ENCODE measurements at regions of chr1 and their contacts with region 1.

Region 1: DNA sequence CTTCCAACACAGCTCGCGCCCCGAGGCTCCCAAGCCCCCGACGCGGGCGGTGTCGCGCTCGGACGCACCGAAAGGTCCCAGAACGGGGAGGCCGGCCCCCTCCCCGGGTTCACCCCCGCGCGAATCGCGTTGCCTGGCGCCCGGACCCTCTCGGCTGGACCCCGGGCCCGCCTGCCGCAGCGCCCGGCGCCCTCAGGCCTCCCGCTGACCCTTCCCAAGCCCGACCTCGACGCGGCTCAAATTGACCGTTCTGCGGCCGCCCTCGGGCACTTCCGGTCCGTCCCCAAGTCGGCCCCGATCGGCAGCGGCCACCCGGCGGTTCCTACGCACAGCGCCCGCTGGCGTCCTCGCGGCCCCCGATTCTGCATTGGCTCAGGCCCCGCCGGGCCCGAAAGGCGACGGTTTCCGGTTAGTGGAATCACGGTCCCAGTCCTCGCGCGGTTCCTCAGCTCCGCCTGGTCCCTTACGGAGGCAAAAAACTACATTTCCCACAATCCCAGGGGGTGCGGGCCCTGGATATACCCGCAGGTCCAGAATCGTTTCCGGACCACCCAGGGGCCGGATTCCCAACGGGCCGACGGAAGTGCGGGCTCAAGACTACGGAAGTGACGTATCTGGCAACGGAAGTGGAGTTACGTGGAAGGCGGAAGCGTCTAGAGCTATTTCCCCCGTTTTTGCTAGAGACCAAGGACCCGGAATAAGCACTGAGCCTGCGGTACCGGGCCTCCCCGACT is at the start of gene AURKAIP1:
- DNase-seq: peak; percentile 88
- ATAC-seq: peak; percentile 91
- H3K4me3 Mint-ChIP-seq: peak within 1 kb of the TSS; percentile 90
- H3K27ac Mint-ChIP-seq: peak within 1 kb of the TSS; percentile 92
- H3K4me1 Mint-ChIP-seq: peaks cover 23% of the 10 kb centered on the region
- H3K27me3 Mint-ChIP-seq: no peaks in the 10 kb centered on the region
- CTCF ChIP-seq: no peak
- total RNA-seq, gene AURKAIP1: 91.5 and 105 TPM in 2 replicates

Region 2: GRCh38 chr1:958823-959729 is 416.0 kb before region 1 on chr1 and contains the start of gene NOC2L:
- CTCF ChIA-PET with region 1: no interaction called
- POLR2A ChIA-PET with region 1: no interaction called
- intact Hi-C with region 1: loop called (anchors 1 kb)
- DNase-seq: peak; percentile 95
- ATAC-seq: peak; percentile 90
- H3K4me3 Mint-ChIP-seq: peak within 1 kb of the TSS; percentile 89
- H3K27ac Mint-ChIP-seq: peak within 1 kb of the TSS; percentile 56
- H3K4me1 Mint-ChIP-seq: peaks cover 28% of the 10 kb centered on the region
- H3K27me3 Mint-ChIP-seq: no peaks in the 10 kb centered on the region
- CTCF ChIP-seq: no peak
- total RNA-seq, gene NOC2L: 95.5 and 96.8 TPM in 2 replicates

Region 3: GRCh38 chr1:1033009-1033587 is 342.0 kb before region 1 on chr1:
- CTCF ChIA-PET with region 1: interaction called, 3 read pairs
- POLR2A ChIA-PET with region 1: interaction called, 3 read pairs
- intact Hi-C with region 1: loop called (anchors 5 kb)
- DNase-seq: peak; percentile 97
- ATAC-seq: peak; percentile 96
- H3K4me3 Mint-ChIP-seq: peak overlapping the region; percentile 72
- H3K27ac Mint-ChIP-seq: peak overlapping the region; percentile 24
- H3K4me1 Mint-ChIP-seq: peaks cover 19% of the 10 kb centered on the region
- H3K27me3 Mint-ChIP-seq: no peaks in the 10 kb centered on the region
- CTCF ChIP-seq: peak; percentile 67

Region 4: DNA sequence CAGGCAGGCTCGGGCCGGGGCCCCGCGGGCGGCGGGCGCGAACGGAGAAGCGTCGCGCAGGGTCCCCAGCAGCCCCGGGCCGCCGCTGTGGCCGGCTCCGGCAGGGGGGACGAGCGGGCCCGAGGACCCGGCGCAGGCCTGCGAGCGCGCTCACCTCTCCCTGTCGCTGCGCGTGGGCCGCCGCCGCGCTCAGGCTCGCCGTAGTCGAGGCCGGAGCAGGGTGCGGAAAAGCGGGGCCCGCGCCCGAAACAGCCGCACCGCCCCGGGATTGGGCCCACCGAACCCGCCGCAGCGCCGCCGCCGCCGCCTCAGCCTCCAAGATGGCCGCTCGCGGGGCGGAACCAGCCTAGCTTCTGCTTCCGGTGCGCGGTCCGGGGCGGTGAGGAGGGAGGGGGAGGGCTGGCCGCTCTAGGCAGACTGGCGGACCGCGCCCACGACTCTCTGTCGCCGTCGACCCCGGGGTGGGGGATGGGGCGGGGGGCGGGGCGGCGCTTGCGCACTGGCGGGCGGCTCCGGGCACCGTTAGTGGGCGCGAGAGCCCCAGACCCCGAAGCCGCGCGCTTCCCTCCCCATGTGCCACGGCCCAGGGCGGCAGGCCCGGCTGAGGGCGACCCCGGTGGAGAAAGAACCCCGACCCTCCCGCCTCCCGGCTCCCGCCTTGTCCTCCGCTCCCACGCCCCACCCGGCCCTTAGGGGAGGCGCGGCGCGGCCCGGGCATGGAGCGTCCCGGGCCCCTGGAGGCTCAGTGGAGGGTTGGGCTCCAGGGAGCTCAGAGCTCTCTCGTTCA is 101.4 kb before region 1 on chr1 and contains the start of gene UBE2J2:
- CTCF ChIA-PET with region 1: no interaction called
- POLR2A ChIA-PET with region 1: interaction called, 5 read pairs
- intact Hi-C with region 1: loop called (anchors 1 kb)
- DNase-seq: peak; percentile 82
- ATAC-seq: peak; percentile 96
- H3K4me3 Mint-ChIP-seq: peak within 1 kb of the TSS; percentile 87
- H3K27ac Mint-ChIP-seq: peak within 1 kb of the TSS; percentile 70
- H3K4me1 Mint-ChIP-seq: peaks cover 38% of the 10 kb centered on the region
- H3K27me3 Mint-ChIP-seq: no peaks in the 10 kb centered on the region
- CTCF ChIP-seq: no peak
- total RNA-seq, gene UBE2J2: 79.2 and 89.9 TPM in 2 replicates

Region 5: DNA sequence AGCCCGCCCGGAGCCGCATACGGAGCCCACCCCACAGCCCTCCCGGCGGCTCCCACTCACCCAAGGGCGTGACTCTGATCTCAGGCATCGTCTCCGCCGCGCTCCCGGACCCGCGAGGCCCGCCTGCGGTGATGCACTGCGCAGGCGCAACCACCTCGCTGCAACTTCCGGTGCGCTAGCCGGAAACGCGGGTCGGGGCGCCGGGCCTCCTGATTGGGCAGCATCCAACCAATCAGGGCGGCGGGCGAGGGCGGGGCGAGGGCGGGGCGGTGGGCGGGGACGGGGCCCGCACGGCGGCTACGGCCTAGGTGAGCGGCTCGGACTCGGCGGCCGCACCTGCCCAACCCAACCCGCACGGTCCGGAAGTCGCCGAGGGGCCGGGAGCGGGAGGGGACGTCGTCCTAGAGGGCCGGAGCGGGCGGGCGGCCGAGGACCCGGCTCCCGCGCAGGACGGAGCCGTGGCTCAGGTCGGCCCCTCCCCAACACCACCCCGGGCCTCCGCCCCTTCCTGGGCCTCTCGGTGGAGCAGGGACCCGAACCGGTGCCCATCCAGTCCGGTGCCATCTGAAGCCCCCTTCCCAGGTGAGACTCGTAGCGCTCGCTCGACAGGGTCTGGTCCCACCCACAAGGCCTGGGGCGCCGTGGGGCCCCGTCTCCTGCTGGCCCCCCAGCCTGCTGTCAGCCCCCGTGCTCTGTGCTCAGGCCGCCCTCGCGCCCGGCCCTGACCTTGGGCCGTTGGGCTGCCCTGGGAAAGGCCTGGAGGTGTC is 50.4 kb before region 1 on chr1 and contains the starts of genes CPTP and INTS11:
- CTCF ChIA-PET with region 1: no interaction called
- POLR2A ChIA-PET with region 1: interaction called, 5 read pairs
- intact Hi-C with region 1: loop called (anchors 1 kb)
- DNase-seq: peak; percentile 91
- ATAC-seq: peak; percentile 87
- H3K4me3 Mint-ChIP-seq: peak within 1 kb of the TSS; percentile 90
- H3K27ac Mint-ChIP-seq: peak within 1 kb of the TSS; percentile 80
- H3K4me1 Mint-ChIP-seq: peaks cover 41% of the 10 kb centered on the region
- H3K27me3 Mint-ChIP-seq: no peaks in the 10 kb centered on the region
- CTCF ChIP-seq: no peak
- total RNA-seq, gene CPTP: 13.8 and 15.3 TPM in 2 replicates
- total RNA-seq, gene INTS11: 131 and 151 TPM in 2 replicates

Region 6: DNA sequence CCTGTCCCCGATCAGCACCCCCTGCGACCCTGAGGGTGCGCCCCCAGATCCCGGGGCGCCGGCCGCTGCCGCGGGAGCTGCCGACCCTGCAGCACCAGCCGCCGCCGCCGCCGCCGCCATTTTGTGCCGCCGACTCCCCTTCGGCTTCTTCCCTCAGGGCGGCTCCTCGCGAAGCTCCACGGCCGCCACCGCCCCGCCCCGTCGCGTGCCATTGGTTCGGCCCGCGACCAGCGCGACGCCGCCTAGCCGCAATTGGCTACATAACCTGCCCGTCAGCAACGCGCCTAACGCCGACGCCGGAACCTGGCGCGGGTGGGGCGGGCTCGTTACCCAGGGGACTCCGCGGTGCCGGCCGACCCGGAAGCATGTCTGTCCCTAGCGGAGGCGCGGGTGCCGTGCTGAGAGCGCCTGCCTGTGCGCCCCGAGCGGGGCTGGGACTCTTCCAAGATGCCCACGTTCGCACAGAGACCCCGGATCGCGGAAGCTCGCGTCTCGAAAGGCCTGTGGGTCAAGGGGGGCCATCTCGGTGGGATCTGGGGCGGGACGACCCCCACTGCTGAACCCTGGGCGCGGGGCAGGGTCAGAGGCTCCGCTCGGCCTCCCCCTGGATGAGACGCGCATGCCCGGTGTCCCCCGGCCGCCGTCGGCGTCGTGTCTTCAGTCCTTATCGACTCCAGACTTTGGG is 24.2 kb after region 1 on chr1 and contains the start of gene CCNL2:
- CTCF ChIA-PET with region 1: no interaction called
- POLR2A ChIA-PET with region 1: interaction called, 116 read pairs
- intact Hi-C with region 1: loop called (anchors 1 kb)
- DNase-seq: peak; percentile 98
- ATAC-seq: peak; percentile 96
- H3K4me3 Mint-ChIP-seq: peak within 1 kb of the TSS; percentile 92
- H3K27ac Mint-ChIP-seq: peak within 1 kb of the TSS; percentile 86
- H3K4me1 Mint-ChIP-seq: peaks cover 55% of the 10 kb centered on the region
- H3K27me3 Mint-ChIP-seq: no peaks in the 10 kb centered on the region
- CTCF ChIP-seq: no peak
- total RNA-seq, gene CCNL2: 188 and 225 TPM in 2 replicates

Region 7: DNA sequence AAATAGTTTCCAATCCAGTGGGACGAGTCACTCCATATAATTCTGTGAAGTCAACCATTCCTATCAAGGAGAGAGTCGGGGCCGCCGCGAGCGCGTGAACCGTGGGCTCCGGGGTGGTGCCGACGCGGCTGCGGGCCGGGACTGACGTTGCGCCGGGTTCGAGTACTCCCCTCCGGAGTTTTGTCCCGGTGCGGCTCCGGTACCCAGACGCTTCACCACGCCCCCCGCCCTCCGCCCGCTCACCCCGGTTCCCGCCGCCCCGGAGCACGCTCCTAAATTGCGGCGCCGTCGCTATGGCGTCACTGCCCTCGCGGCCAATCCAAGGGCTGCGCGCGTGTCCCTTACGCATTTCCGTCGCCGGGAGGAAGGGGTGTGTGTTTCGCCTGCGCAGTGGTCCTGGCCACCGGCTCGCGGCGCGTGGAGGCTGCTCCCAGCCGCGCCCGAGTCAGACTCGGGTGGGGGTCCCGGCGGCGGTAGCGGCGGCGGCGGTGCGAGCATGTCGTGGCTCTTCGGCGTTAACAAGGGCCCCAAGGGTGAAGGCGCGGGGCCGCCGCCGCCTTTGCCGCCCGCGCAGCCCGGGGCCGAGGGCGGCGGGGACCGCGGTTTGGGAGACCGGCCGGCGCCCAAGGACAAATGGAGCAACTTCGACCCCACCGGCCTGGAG is 96.4 kb after region 1 on chr1 and contains the start of gene ATAD3B:
- CTCF ChIA-PET with region 1: no interaction called
- POLR2A ChIA-PET with region 1: no interaction called
- intact Hi-C with region 1: loop called (anchors 1 kb)
- DNase-seq: peak; percentile 84
- ATAC-seq: peak; percentile 95
- H3K4me3 Mint-ChIP-seq: peak within 1 kb of the TSS; percentile 90
- H3K27ac Mint-ChIP-seq: peak within 1 kb of the TSS; percentile 82
- H3K4me1 Mint-ChIP-seq: peaks cover 25% of the 10 kb centered on the region
- H3K27me3 Mint-ChIP-seq: no peaks in the 10 kb centered on the region
- CTCF ChIP-seq: no peak
- total RNA-seq, gene ATAD3B: 47.4 and 49.5 TPM in 2 replicates

Measured in activated B cell treated with CpG ODN at 0.5 μM for 24 hours (primary cell).